Vagina (tissue), 2 donors: ENCODE measurements at regions of chr9 and their contacts with region 1.

Region 1: GRCh38 chr9:2755285-2755684 is 38.0 kb downstream of the KCNV2 start:
- DNase-seq: no peak
- H3K4me3 ChIP-seq: no peak overlapping the region
- H3K27ac ChIP-seq: no peak overlapping the region
- H3K4me1 ChIP-seq: no peaks in the 10 kb centered on the region
- H3K27me3 ChIP-seq: no peaks in the 10 kb centered on the region
- CTCF ChIP-seq: no peak
- POLR2A ChIP-seq: no peak

Region 2: DNA sequence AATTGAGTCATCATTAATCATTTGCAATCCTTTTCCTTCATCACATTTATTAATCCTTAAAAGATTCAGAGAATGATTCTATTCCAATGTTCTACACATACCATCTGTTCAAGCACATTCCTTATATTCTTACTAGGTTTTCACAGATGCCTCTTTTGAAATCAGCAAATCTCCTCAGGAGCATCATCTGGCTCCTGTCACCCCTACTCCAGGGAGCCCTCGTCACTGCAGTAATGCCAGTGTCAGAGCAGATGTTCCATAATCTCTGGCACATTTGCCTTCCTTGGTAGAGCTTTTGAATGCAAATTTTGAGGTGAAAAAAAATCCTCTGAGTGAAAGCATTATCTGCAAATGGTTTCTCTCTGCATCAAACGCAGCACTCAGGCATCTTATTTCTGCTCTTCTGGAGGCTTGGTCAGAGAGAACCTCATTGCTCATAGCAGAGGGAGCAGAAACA is 45.6 kb before region 1 on chr9:
- intact Hi-C with region 1: no loop called
- DNase-seq: no peak
- H3K4me3 ChIP-seq: no peak overlapping the region
- H3K27ac ChIP-seq: no peak overlapping the region
- H3K4me1 ChIP-seq: no peaks in the 10 kb centered on the region
- H3K27me3 ChIP-seq: no peaks in the 10 kb centered on the region
- CTCF ChIP-seq: no peak
- POLR2A ChIP-seq: no peak

Region 3: GRCh38 chr9:2907411-2907810 is 152.1 kb after region 1 on chr9:
- intact Hi-C with region 1: loop called (anchors 2 kb)
- DNase-seq: no peak
- H3K4me3 ChIP-seq: no peak overlapping the region
- H3K27ac ChIP-seq: no peak overlapping the region
- H3K4me1 ChIP-seq: no peaks in the 10 kb centered on the region
- H3K27me3 ChIP-seq: no peaks in the 10 kb centered on the region
- CTCF ChIP-seq: no peak
- POLR2A ChIP-seq: no peak